CD14-positive monocyte (primary cell): ENCODE measurements at regions of chr5 and their contacts with region 1.

Region 1: DNA sequence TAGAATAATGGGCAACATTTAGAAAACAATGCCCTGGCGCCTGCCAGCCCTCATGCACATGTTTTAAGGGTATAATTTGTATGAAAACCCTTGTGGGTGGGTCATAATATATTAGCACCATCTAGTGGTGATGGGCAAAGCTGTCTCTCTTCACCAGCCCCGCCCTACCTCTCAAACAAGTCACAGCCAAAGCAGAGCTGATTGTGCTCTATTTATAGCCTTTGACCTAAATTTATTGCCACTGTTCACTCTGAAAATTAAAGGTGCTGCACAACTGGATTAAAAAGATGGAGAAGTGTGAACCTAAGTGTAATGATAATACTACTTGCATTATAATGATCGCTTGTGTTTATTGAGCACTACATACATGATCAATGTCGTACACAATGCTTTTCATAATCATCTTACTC is 131.9 kb upstream of the ANKH start:
- DNase-seq: peak; percentile 44 to 64 (median 61)
- H3K4me3 ChIP-seq: no peak overlapping the region
- H3K4me3 Mint-ChIP-seq: no peak overlapping the region
- H3K27ac ChIP-seq: no peak overlapping the region
- H3K27ac Mint-ChIP-seq: peak overlapping the region in 1 of 7 donors; percentile 8
- H3K4me1 ChIP-seq: peaks cover 22 to 32% of the 10 kb centered on the region in 2 donors
- H3K4me1 Mint-ChIP-seq: peaks cover 27% of the 10 kb centered on the region
- H3K27me3 ChIP-seq: peaks cover 0 to 6% of the 10 kb centered on the region in 2 donors
- H3K27me3 Mint-ChIP-seq: peaks cover 5 to 18% (median 9%) of the 10 kb centered on the region in 3 donors
- CTCF ChIP-seq: peak; percentile 82

Region 2: GRCh38 chr5:14727428-14727865 is 276.1 kb before region 1 on chr5:
- intact Hi-C with region 1: loop called (anchors 2 to 5 kb)
- DNase-seq: peak; percentile 58 to 81 (median 63)
- H3K4me3 ChIP-seq: no peak overlapping the region
- H3K4me3 Mint-ChIP-seq: no peak overlapping the region
- H3K27ac ChIP-seq: no peak overlapping the region
- H3K27ac Mint-ChIP-seq: no peak overlapping the region
- H3K4me1 ChIP-seq: peaks cover 20 to 28% of the 10 kb centered on the region in 2 donors
- H3K4me1 Mint-ChIP-seq: peaks cover 28% of the 10 kb centered on the region
- H3K27me3 ChIP-seq: no peaks in the 10 kb centered on the region
- H3K27me3 Mint-ChIP-seq: peaks cover 2 to 3% (median 2%) of the 10 kb centered on the region in 3 donors
- CTCF ChIP-seq: peak; percentile 97

Region 3: GRCh38 chr5:14809369-14810155 is 194.0 kb before region 1 on chr5:
- intact Hi-C with region 1: loop called in 1 of 2 experiments (anchors 5 kb)
- DNase-seq: peak; percentile 89 to 95 (median 94)
- H3K4me3 ChIP-seq: peak overlapping the region in 2 of 3 experiments; percentile 8 to 53
- H3K4me3 Mint-ChIP-seq: peak overlapping the region; percentile 59 to 87
- H3K27ac ChIP-seq: peak overlapping the region; percentile 81 to 91
- H3K27ac Mint-ChIP-seq: peak overlapping the region; percentile 86 to 95 (median 91)
- H3K4me1 ChIP-seq: peaks cover 22 to 26% of the 10 kb centered on the region in 2 donors
- H3K4me1 Mint-ChIP-seq: peaks cover 32% of the 10 kb centered on the region
- H3K27me3 ChIP-seq: no peaks in the 10 kb centered on the region
- H3K27me3 Mint-ChIP-seq: no peaks in the 10 kb centered on the region
- CTCF ChIP-seq: no peak

Region 4: DNA sequence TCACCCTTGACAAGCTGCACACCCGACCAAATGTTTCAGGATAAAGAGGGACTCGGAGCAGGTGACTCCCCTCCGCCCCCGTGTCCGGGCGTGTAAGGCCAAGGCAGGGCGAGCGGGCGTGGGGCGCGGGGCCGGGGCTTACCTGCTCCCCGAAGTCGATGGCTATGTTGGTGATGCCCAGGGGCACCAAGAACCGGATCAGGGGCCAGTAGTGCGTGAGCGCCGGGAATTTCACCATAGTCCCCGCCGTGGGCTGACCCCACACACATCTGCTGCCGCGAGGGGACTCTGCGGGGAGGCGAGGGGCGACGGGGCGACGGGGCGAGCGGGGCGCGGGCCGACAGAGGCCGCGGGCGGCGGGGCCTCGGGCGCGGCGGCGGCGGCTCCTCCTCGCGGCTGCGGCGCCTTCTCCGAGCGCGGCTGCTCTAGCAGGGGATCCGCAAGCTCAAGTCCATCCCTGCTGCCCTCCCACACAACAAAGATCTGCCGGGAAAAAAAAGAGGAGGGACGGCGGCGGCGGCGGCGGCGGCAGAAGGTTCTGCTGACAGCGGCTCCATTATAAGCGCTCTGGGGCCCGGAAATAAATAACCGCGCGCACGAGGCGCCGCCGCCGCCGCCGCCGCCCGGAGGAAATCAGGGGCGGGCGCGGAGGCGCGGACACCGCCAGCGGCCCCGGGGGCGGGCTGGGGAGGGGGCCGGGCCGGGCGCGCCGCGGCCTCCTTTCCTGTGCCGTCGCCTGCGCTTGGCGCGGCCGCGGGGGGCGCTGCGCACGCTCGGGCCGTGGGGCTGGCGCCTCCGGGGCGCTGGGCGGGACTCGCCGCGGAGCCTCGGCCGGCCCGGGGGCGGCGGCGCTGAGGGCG is 132.1 kb before region 1 on chr5 and contains the start of gene ANKH:
- intact Hi-C with region 1: loop called in 1 of 2 experiments (anchors 10 kb)
- DNase-seq: peak; percentile 54 to 68 (median 66)
- H3K4me3 ChIP-seq: peak within 1 kb of the TSS; percentile 52 to 84 (median 73)
- H3K4me3 Mint-ChIP-seq: peak within 1 kb of the TSS; percentile 84 to 88
- H3K27ac ChIP-seq: peak within 1 kb of the TSS; percentile 55 to 61
- H3K27ac Mint-ChIP-seq: peak within 1 kb of the TSS in 6 of 7 donors; percentile 40 to 83 (median 78)
- H3K4me1 ChIP-seq: peaks cover 24 to 26% of the 10 kb centered on the region in 2 donors
- H3K4me1 Mint-ChIP-seq: peaks cover 22% of the 10 kb centered on the region
- H3K27me3 ChIP-seq: peaks cover 39 to 63% of the 10 kb centered on the region in 2 donors
- H3K27me3 Mint-ChIP-seq: peaks cover 49 to 56% (median 54%) of the 10 kb centered on the region in 3 donors
- CTCF ChIP-seq: no peak
- polyA plus RNA-seq, gene ANKH: 2.4 to 6.3 (median 3.1) TPM

Region 5: DNA sequence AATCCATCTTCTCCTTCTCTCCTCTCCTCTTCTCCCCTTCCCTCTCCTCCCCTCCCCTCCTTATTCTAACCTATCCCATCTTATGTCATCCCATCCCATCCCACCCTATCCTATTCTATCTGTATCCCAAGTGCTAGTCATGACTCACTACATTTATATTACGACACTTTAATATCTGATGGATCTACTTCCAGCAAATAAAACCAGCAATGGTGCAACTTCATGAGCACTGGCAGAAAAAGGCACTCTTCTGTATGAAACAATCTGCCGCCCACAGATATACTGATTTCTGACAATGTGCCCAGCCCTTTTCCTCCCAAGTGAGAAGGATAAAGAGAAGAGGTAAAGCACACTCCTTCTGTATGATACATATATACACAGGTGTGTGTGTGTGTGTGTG is 45.3 kb before region 1 on chr5:
- intact Hi-C with region 1: loop called (anchors 5 kb)
- DNase-seq: no peak
- H3K4me3 ChIP-seq: no peak overlapping the region
- H3K4me3 Mint-ChIP-seq: no peak overlapping the region
- H3K27ac ChIP-seq: no peak overlapping the region
- H3K27ac Mint-ChIP-seq: no peak overlapping the region
- H3K4me1 ChIP-seq: no peaks in the 10 kb centered on the region
- H3K4me1 Mint-ChIP-seq: peaks cover 7% of the 10 kb centered on the region
- H3K27me3 ChIP-seq: no peaks in the 10 kb centered on the region
- H3K27me3 Mint-ChIP-seq: peaks cover 1 to 7% (median 2%) of the 10 kb centered on the region in 3 donors
- CTCF ChIP-seq: no peak